MCF 10A (cell line): ENCODE measurements at regions of chr18 and their contacts with region 1.

Region 1: GRCh38 chr18:286515-287310 is 18.9 kb upstream of the THOC1 start:
- DNase-seq: peak; percentile 35
- H3K4me3 Mint-ChIP-seq: no peak overlapping the region
- H3K27ac Mint-ChIP-seq: no peak overlapping the region
- H3K4me1 Mint-ChIP-seq: no peaks in the 10 kb centered on the region
- H3K27me3 Mint-ChIP-seq: no peaks in the 10 kb centered on the region
- CTCF ChIP-seq: peak; percentile 28

Region 2: DNA sequence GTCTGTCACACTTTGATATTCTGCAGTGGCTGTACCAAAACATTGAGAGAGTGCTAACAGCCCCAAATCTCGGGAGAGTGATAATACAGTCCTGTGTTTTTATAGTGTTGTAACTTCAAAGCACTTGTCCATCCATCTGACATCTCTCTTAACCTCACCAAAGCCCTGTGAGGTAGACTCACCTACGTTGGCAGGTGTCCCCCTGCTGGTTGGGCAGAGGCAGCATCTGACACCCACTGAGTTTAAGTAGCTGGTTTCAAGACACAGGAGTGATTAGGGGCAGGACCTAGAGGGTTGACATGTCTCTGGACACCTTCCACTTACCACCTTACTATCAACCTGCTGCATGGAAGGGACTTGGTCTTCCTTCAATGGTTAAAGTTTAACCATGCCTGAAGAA is 190.9 kb after region 1 on chr18:
- CTCF ChIA-PET with region 1: interaction called, 5 read pairs
- POLR2A ChIA-PET with region 1: no interaction called
- intact Hi-C with region 1: loop called (anchors 2 kb)
- DNase-seq: peak; percentile 53
- H3K4me3 Mint-ChIP-seq: no peak overlapping the region
- H3K27ac Mint-ChIP-seq: no peak overlapping the region
- H3K4me1 Mint-ChIP-seq: no peaks in the 10 kb centered on the region
- H3K27me3 Mint-ChIP-seq: no peaks in the 10 kb centered on the region
- CTCF ChIP-seq: no peak